Panc1 (cell line): ENCODE measurements at regions of chr15 and their contacts with region 1.

Region 1: GRCh38 chr15:55494931-55495330 is 13.1 kb downstream of the DNAAF4 start:
- DNase-seq: no peak
- ATAC-seq: no peak
- H3K4me3 ChIP-seq: no peak overlapping the region
- H3K27ac ChIP-seq: no peak overlapping the region
- H3K4me1 ChIP-seq: peaks cover 3% of the 10 kb centered on the region; the same call in 1 of the 2 replicates
- H3K27me3 ChIP-seq: no peaks in the 10 kb centered on the region
- CTCF ChIP-seq: no peak

Region 2: DNA sequence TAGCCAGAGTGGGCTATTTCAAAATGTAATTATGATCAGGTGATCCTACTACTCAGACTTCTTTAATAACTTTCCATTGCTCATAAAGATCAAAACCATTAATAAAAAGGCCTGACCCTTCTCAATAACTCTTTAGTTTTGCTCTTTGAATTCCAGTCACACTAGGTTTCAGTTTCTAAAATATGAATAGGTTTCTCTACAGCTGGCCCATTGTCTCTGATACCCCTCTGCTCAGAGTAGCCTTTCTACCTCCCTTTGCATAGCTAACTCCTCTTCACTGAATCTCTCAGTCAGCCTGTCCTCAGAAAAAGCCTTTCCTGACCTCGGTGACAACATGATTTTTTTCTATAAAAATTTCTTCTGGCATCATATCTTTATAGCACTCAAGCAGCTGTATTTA is 1307.6 kb before region 1 on chr15:
- CTCF ChIA-PET with region 1: no interaction called
- POLR2A ChIA-PET with region 1: interaction called, 16 read pairs
- in situ Hi-C with region 1: no loop called
- intact Hi-C with region 1: no loop called
- DNase-seq: no peak
- ATAC-seq: no peak
- H3K4me3 ChIP-seq: no peak overlapping the region
- H3K27ac ChIP-seq: no peak overlapping the region
- H3K4me1 ChIP-seq: no peaks in the 10 kb centered on the region
- H3K27me3 ChIP-seq: no peaks in the 10 kb centered on the region
- CTCF ChIP-seq: no peak

Region 3: DNA sequence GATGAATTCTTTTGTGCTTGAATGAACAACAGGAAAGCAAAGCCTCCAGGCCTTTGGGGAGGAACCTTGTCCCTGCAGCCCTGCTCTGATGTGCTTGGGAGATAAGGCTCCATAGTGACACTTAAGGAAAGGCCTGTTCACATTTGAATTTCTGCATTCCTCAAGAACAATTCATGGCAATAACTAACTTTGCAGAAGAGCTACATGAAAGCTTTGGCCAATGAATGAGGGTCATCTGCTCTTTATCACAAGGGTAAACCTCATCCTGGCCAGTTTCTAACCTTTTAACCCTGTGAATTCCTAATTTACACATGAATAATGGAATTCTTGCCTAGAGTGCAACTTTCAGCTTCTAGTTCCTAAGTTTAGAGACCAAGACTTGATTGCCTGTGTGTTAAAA is 242.4 kb after region 1 on chr15:
- CTCF ChIA-PET with region 1: no interaction called
- POLR2A ChIA-PET with region 1: no interaction called
- in situ Hi-C with region 1: no loop called
- intact Hi-C with region 1: no loop called
- DNase-seq: no peak
- ATAC-seq: no peak; the same call in 1 of the 2 replicates
- H3K4me3 ChIP-seq: no peak overlapping the region
- H3K27ac ChIP-seq: no peak overlapping the region
- H3K4me1 ChIP-seq: peaks cover 24% of the 10 kb centered on the region
- H3K27me3 ChIP-seq: no peaks in the 10 kb centered on the region
- CTCF ChIP-seq: no peak

Region 4: GRCh38 chr15:55758580-55758986 is 263.7 kb after region 1 on chr15:
- CTCF ChIA-PET with region 1: interaction called, 11 read pairs
- POLR2A ChIA-PET with region 1: no interaction called
- in situ Hi-C with region 1: no loop called
- intact Hi-C with region 1: no loop called
- DNase-seq: no peak
- ATAC-seq: no peak
- H3K4me3 ChIP-seq: no peak overlapping the region
- H3K27ac ChIP-seq: no peak overlapping the region
- H3K4me1 ChIP-seq: no peaks in the 10 kb centered on the region
- H3K27me3 ChIP-seq: no peaks in the 10 kb centered on the region
- CTCF ChIP-seq: no peak